Caco-2 (cell line): ENCODE measurements at regions of chr2 and their contacts with region 1.

Region 1: GRCh38 chr2:44955593-44956392 is 14.3 kb downstream of the SIX3 start:
- DNase-seq: peak; percentile 75 to 88
- H3K4me3 ChIP-seq: peak overlapping the region; percentile 32
- H3K4me3 Mint-ChIP-seq: peak overlapping the region; percentile 73
- H3K27ac Mint-ChIP-seq: no peak overlapping the region
- H3K4me1 ChIP-seq: no peaks in the 10 kb centered on the region
- H3K4me1 Mint-ChIP-seq: peaks cover 5% of the 10 kb centered on the region
- H3K27me3 ChIP-seq: no peaks in the 10 kb centered on the region; the same call in 1 of the 2 replicates
- H3K27me3 Mint-ChIP-seq: peaks cover 5% of the 10 kb centered on the region
- CTCF ChIP-seq: peak; percentile 89 to 90

Region 2: DNA sequence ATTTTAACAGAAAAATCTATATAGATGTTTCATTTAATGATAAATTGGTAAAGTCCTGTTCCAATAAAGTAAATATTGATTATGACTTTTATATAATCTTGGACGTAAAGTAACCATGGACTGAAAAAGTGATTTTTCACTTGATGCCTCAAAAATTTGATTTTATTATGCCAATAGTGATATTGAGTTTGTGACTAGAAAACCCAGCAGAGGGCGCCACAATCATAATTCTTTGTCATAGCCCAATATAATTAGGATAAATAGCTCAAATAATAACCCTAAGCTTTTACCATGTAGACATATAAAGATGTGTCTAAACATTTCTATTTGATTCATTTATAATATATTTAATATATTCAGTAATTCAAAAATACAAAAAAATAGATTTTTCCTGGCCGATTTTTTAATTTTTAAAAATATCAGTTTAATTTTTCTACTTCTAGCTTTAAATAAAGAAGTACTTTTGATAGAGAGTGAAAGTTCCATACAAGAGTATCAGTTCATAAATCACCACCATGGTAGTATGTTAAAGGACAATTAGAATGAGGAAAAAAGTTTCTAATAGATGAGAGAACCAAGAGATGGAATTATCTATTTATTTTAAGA is 563.4 kb before region 1 on chr2:
- CTCF ChIA-PET with region 1: interaction called, 31 read pairs
- POLR2A ChIA-PET with region 1: no interaction called
- intact Hi-C with region 1: loop called (anchors 1 kb)
- DNase-seq: peak; percentile 55 to 62
- H3K4me3 ChIP-seq: no peak overlapping the region
- H3K4me3 Mint-ChIP-seq: no peak overlapping the region
- H3K27ac Mint-ChIP-seq: no peak overlapping the region
- H3K4me1 ChIP-seq: no peaks in the 10 kb centered on the region
- H3K4me1 Mint-ChIP-seq: peaks cover 7% of the 10 kb centered on the region
- H3K27me3 ChIP-seq: no peaks in the 10 kb centered on the region
- H3K27me3 Mint-ChIP-seq: no peaks in the 10 kb centered on the region
- CTCF ChIP-seq: peak; percentile 59 to 79

Region 3: GRCh38 chr2:44770221-44771195 is 185.3 kb before region 1 on chr2:
- CTCF ChIA-PET with region 1: interaction called, 15 read pairs
- POLR2A ChIA-PET with region 1: no interaction called
- intact Hi-C with region 1: loop called (anchors 5 kb)
- DNase-seq: no peak
- H3K4me3 ChIP-seq: no peak overlapping the region
- H3K4me3 Mint-ChIP-seq: no peak overlapping the region
- H3K27ac Mint-ChIP-seq: no peak overlapping the region
- H3K4me1 ChIP-seq: peaks cover 8% of the 10 kb centered on the region
- H3K4me1 Mint-ChIP-seq: peaks cover 16% of the 10 kb centered on the region
- H3K27me3 ChIP-seq: no peaks in the 10 kb centered on the region
- H3K27me3 Mint-ChIP-seq: no peaks in the 10 kb centered on the region
- CTCF ChIP-seq: peak; percentile 18 to 28

Region 4: DNA sequence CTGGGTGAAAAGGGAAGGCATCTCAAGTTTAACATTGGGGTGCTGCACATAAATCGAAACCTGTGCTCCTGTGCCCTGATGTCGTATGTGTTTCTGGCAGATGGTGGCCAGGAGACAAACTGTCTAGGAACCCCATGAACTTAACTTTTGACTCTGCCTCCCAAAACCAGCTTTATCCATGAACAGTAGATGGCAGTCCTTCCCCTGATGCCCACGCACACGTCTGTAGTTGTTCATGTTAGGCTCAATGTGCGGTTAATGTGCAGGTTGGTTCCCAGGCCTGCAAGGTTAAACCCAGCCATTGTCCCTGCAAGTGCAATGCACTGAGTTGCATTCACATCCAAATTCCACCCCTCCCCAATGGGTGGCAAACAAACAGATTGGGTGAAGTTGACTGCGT is 58.4 kb before region 1 on chr2:
- CTCF ChIA-PET with region 1: interaction called, 10 read pairs
- POLR2A ChIA-PET with region 1: no interaction called
- intact Hi-C with region 1: loop called (anchors 1 kb)
- DNase-seq: no peak
- H3K4me3 ChIP-seq: no peak overlapping the region
- H3K4me3 Mint-ChIP-seq: no peak overlapping the region
- H3K27ac Mint-ChIP-seq: no peak overlapping the region
- H3K4me1 ChIP-seq: no peaks in the 10 kb centered on the region
- H3K4me1 Mint-ChIP-seq: peaks cover 4% of the 10 kb centered on the region
- H3K27me3 ChIP-seq: no peaks in the 10 kb centered on the region
- H3K27me3 Mint-ChIP-seq: peaks cover 6% of the 10 kb centered on the region
- CTCF ChIP-seq: peak in 1 of 2 experiments; percentile 25

Region 5: GRCh38 chr2:44979581-44979980 is 23.8 kb after region 1 on chr2:
- CTCF ChIA-PET with region 1: no interaction called
- POLR2A ChIA-PET with region 1: no interaction called
- intact Hi-C with region 1: no loop called
- DNase-seq: no peak
- H3K4me3 ChIP-seq: no peak overlapping the region
- H3K4me3 Mint-ChIP-seq: no peak overlapping the region
- H3K27ac Mint-ChIP-seq: no peak overlapping the region
- H3K4me1 ChIP-seq: no peaks in the 10 kb centered on the region
- H3K4me1 Mint-ChIP-seq: no peaks in the 10 kb centered on the region
- H3K27me3 ChIP-seq: no peaks in the 10 kb centered on the region
- H3K27me3 Mint-ChIP-seq: no peaks in the 10 kb centered on the region
- CTCF ChIP-seq: no peak